CD4-positive, alpha-beta memory T cell (primary cell): ENCODE measurements at regions of chr16 and their contacts with region 1.

Region 1: DNA sequence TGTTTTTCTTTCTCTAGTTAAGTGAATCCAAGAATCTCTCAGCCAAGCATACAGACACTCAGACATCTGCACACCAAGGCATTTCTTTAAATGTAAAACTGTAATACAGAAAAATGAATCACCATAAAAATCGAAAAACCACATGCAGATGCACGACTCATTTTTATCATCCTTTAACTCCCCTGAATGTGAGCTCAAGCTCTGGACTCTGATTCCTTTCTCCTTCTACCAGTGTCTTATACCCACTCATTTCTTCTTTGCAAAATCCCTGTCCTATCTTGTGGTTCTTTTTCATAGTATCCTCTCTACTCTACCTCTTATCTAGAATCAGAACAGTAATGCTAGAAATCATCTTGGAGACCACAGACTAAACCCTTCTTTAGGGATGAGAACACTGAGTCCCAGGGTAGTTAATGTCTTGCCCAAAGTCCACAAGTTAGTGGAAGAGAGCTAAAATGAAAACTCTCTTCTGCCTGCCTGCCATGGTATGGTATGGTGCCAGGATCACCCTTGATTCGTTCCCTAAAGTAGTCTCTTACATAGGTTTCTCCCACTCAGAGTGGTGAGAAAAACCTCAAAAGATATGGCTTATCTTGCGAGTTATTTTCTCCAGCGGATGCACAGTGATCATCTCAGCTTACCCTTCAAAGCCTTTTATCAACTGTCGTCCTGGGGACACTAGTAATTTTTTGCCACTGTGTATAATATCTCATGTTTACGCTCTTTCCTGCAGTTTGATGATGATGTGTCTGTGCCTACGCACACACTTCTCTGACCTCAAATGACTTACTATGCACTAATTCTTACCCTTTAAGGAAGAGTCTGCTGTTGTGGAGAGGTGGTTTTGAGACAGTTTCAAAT is 30.2 kb downstream of the BRD7 start:
- DNase-seq: peak; percentile 51 to 86 (median 73)
- H3K4me3 ChIP-seq: no peak overlapping the region
- H3K4me3 Mint-ChIP-seq: peak overlapping the region; percentile 2 to 72 (median 49)
- H3K27ac ChIP-seq: peak overlapping the region; percentile 79
- H3K27ac Mint-ChIP-seq: peak overlapping the region; percentile 88 to 99 (median 95)
- H3K4me1 ChIP-seq: peaks cover 34% of the 10 kb centered on the region
- H3K4me1 Mint-ChIP-seq: peaks cover 25 to 61% (median 44%) of the 10 kb centered on the region in 4 donors
- H3K27me3 ChIP-seq: no peaks in the 10 kb centered on the region
- H3K27me3 Mint-ChIP-seq: no peaks in the 10 kb centered on the region

Region 2: GRCh38 chr16:50313596-50314478 is 24.8 kb before region 1 on chr16:
- CTCF ChIA-PET with region 1: interaction called, 4 read pairs
- POLR2A ChIA-PET with region 1: interaction called, 25 read pairs
- intact Hi-C with region 1: no loop called
- DNase-seq: peak; percentile 26 to 67 (median 44)
- H3K4me3 ChIP-seq: no peak overlapping the region
- H3K4me3 Mint-ChIP-seq: peak overlapping the region in 5 of 8 donors; percentile 3 to 76 (median 17)
- H3K27ac ChIP-seq: no peak overlapping the region
- H3K27ac Mint-ChIP-seq: peak overlapping the region; percentile 62 to 90 (median 85)
- H3K4me1 ChIP-seq: peaks cover 25% of the 10 kb centered on the region
- H3K4me1 Mint-ChIP-seq: peaks cover 15 to 49% (median 29%) of the 10 kb centered on the region in 4 donors
- H3K27me3 ChIP-seq: no peaks in the 10 kb centered on the region
- H3K27me3 Mint-ChIP-seq: no peaks in the 10 kb centered on the region

Region 3: GRCh38 chr16:50354629-50355456 is 16.2 kb after region 1 on chr16:
- CTCF ChIA-PET with region 1: interaction called, 628 read pairs
- POLR2A ChIA-PET with region 1: interaction called, 297 read pairs
- intact Hi-C with region 1: loop called (anchors 1 kb)
- DNase-seq: peak in 4 of 5 donors; percentile 42 to 61 (median 54)
- H3K4me3 ChIP-seq: no peak overlapping the region
- H3K4me3 Mint-ChIP-seq: no peak overlapping the region
- H3K27ac ChIP-seq: no peak overlapping the region
- H3K27ac Mint-ChIP-seq: peak overlapping the region in 6 of 7 donors; percentile 0 to 89 (median 41)
- H3K4me1 ChIP-seq: peaks cover 3% of the 10 kb centered on the region
- H3K4me1 Mint-ChIP-seq: peaks cover 10 to 36% (median 23%) of the 10 kb centered on the region in 4 donors
- H3K27me3 ChIP-seq: no peaks in the 10 kb centered on the region
- H3K27me3 Mint-ChIP-seq: no peaks in the 10 kb centered on the region

Region 4: DNA sequence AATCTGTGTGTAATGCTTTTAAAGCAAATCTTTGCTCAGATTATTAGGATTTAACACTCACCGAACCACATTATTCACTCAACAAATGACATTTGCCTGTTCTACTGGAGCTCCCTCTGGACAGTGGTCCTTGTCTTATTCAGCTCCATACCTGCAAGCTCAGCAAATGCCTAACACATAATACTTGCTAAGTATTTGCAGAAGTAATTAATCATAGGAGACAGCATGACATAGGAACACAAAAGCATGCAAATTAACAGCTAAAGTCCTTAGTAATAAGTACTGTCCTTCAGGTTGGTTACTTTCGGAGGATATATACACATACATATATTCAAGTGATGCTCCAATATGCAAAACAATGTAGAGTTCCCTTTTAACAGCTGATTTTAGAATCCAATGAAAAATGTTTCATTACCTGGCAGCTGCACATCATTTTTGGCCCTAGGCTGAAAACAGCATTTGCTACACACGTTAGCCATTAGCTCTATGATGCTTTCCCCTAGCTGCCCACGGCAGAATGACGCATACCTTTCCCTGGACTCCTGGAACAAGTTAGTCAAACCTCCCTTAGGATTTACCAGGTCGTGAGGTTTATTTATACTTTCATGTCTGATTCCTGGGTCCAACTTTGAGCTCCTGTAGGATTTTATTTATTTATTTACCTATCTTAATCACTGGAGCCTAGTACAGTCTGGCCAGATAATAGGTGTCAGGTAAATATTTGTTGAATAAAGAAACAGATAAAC is 21.6 kb after region 1 on chr16:
- CTCF ChIA-PET with region 1: interaction called, 628 read pairs
- POLR2A ChIA-PET with region 1: interaction called, 297 read pairs
- intact Hi-C with region 1: loop called (anchors 1 kb)
- DNase-seq: no peak
- H3K4me3 ChIP-seq: no peak overlapping the region
- H3K4me3 Mint-ChIP-seq: peak overlapping the region in 2 of 8 donors; percentile 7 to 13
- H3K27ac ChIP-seq: no peak overlapping the region
- H3K27ac Mint-ChIP-seq: peak overlapping the region; percentile 17 to 88 (median 83)
- H3K4me1 ChIP-seq: peaks cover 47% of the 10 kb centered on the region
- H3K4me1 Mint-ChIP-seq: peaks cover 34 to 73% (median 53%) of the 10 kb centered on the region in 4 donors
- H3K27me3 ChIP-seq: no peaks in the 10 kb centered on the region
- H3K27me3 Mint-ChIP-seq: no peaks in the 10 kb centered on the region